ENCODE measurements at regions of chr12 and their contacts with region 1.

Region 1: GRCh38 chr12:11877869-11878780 is 192.6 kb upstream of the BCL2L14 start:
- DNase-seq: peak; percentile 26
- H3K4me3 Mint-ChIP-seq: no peak overlapping the region
- H3K27ac Mint-ChIP-seq: no peak overlapping the region
- H3K4me1 Mint-ChIP-seq: peaks cover 47% of the 10 kb centered on the region
- H3K27me3 Mint-ChIP-seq: no peaks in the 10 kb centered on the region

Region 2: GRCh38 chr12:11702959-11703358 is 175.2 kb before region 1 on chr12:
- CTCF ChIA-PET with region 1: no interaction called
- intact Hi-C with region 1: loop called (anchors 1 kb)
- DNase-seq: peak; percentile 14
- H3K4me3 Mint-ChIP-seq: no peak overlapping the region
- H3K27ac Mint-ChIP-seq: peak overlapping the region; percentile 76
- H3K4me1 Mint-ChIP-seq: peaks cover 49% of the 10 kb centered on the region
- H3K27me3 Mint-ChIP-seq: no peaks in the 10 kb centered on the region

Region 3: GRCh38 chr12:11812586-11813427 is 65.3 kb before region 1 on chr12:
- CTCF ChIA-PET with region 1: no interaction called
- intact Hi-C with region 1: loop called (anchors 2 kb)
- DNase-seq: peak; percentile 39
- H3K4me3 Mint-ChIP-seq: peak overlapping the region; percentile 51
- H3K27ac Mint-ChIP-seq: peak overlapping the region; percentile 32
- H3K4me1 Mint-ChIP-seq: peaks cover 55% of the 10 kb centered on the region
- H3K27me3 Mint-ChIP-seq: no peaks in the 10 kb centered on the region

Region 4: DNA sequence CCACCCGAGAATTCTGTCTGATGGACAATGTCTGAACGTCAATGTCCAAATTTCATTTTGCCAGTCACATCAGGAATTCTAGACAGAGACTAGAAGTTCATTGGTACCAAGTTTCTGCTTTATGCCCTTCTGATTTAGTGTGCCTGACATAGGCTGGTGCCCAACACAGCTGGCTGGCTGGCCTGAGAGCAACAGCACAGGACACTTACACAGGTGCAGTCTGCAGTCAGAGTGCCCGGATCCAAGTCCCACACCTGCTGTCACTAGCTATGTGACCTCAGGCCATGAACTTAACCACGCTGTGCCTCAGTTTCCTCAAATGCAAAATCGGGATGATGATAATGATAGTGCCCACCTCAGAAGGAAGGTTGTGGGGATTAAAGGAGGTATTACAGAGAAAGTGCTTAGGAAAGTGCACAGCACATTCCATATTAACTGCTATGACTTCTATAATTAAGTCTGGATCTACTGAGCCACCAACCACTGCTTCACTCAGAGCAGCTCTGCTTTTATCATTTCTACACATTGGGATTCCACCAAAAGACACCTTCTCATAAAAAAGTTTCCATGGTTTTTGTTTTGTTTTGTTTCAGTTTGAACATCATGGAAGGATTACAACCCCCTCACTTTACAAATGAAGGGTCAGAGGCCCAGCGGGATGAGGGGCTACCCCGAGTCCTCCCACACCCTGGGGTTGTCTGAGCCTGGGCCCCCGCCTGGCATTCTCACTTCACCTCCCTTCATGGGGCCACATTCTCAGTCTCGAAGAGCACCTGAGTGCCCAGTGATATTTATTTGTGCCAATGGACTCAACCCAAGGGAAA is 23.8 kb after region 1 on chr12:
- CTCF ChIA-PET with region 1: no interaction called
- intact Hi-C with region 1: loop called (anchors 2 kb)
- DNase-seq: peak; percentile 56
- H3K4me3 Mint-ChIP-seq: peak overlapping the region; percentile 54
- H3K27ac Mint-ChIP-seq: peak overlapping the region; percentile 79
- H3K4me1 Mint-ChIP-seq: peaks cover 35% of the 10 kb centered on the region
- H3K27me3 Mint-ChIP-seq: no peaks in the 10 kb centered on the region

Region 5: DNA sequence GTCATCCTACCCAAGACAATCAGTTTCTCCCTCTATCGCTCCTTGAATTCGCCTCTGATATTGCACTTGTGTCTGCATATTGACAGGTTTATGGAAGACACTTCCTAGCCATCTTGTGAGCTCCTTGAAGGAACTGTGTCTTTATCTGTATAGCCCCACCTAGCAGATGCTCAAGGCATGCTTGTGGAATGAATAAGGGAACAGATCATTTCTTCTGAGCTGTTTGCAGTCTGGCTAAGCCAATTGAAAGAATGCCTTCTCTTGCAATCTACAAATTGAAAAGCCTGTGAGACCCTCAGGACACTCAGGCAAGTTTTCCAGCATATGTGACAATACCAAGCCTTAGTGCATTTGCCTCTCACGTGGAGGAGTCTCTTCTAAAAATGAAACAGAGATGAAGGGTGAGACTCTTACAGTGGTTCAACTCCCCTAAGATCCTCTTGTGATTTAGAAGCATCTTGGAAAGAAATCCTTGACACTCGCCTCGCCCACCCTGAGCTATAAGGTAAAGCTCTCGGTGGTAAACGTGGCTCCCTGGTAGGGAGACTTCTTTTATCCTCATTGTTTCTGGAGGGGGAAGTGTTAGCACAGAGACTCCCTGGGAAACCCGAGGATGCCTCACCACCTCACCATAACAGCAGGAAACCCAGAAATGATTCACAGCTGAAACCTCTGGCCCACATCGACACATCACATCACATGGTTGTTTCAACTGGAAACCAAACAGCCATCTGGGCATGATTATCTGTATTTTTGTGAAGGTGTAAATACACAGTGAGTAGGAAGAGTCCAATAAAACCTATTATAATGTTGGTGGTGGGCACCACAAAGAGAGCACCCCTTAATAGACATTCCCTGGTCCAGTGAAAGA is 80.3 kb after region 1 on chr12:
- CTCF ChIA-PET with region 1: no interaction called
- intact Hi-C with region 1: loop called (anchors 1 kb)
- DNase-seq: peak; percentile 84
- H3K4me3 Mint-ChIP-seq: peak overlapping the region; percentile 32
- H3K27ac Mint-ChIP-seq: peak overlapping the region; percentile 73
- H3K4me1 Mint-ChIP-seq: peaks cover 32% of the 10 kb centered on the region
- H3K27me3 Mint-ChIP-seq: peaks cover 11% of the 10 kb centered on the region

Region 6: GRCh38 chr12:12064596-12064995 is 186.5 kb after region 1 on chr12:
- CTCF ChIA-PET with region 1: no interaction called
- intact Hi-C with region 1: no loop called
- DNase-seq: no peak
- H3K4me3 Mint-ChIP-seq: no peak overlapping the region
- H3K27ac Mint-ChIP-seq: no peak overlapping the region
- H3K4me1 Mint-ChIP-seq: peaks cover 4% of the 10 kb centered on the region
- H3K27me3 Mint-ChIP-seq: no peaks in the 10 kb centered on the region

Region 7: DNA sequence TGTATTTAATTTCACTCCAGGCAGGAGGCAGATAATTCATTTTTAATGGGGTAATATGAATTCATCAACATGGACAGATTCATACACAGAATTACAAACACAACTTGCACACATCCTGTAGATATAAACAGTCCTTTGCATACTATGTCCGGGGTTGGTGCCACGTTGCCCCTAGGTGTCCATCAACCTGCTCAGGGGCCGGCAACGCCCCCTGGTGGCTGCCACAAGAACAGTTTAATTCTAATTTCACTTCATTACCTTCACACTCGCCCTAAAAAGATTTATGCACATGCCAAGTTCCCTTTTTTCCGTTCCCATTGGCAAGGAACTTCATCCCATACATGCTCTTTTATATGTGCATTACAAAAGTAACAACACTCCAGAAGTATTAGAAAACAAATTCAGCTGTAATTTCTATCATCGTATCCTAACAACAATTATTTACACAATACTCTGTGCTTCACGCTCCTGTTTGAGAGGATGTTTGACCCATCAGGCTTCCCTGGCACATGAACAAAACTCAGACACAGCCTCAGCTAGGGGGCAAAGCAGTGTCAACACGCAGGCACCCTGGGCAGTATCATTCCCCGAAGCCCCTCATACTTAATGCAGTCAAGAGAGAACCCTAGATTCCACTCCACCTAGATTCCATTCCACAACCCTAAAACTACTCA is 456.4 kb after region 1 on chr12:
- CTCF ChIA-PET with region 1: no interaction called
- intact Hi-C with region 1: no loop called
- DNase-seq: peak; percentile 74
- H3K4me3 Mint-ChIP-seq: no peak overlapping the region
- H3K27ac Mint-ChIP-seq: no peak overlapping the region
- H3K4me1 Mint-ChIP-seq: peaks cover 27% of the 10 kb centered on the region
- H3K27me3 Mint-ChIP-seq: no peaks in the 10 kb centered on the region

Measured in activated naive CD4-positive, alpha-beta T cell treated with anti-CD3 and anti-CD28 coated beads for 36 hours (primary cell).